Mammary epithelial cell (primary cell): ENCODE measurements at regions of chr9 and their contacts with region 1.

Region 1: GRCh38 chr9:121286973-121287741 is 19.2 kb downstream of the GSN start:
- DNase-seq: peak; percentile 99
- H3K4me3 ChIP-seq: peak overlapping the region in 1 of 3 experiments; percentile 32
- H3K27ac ChIP-seq: peak overlapping the region; percentile 100
- H3K4me1 ChIP-seq: peaks cover 63% of the 10 kb centered on the region
- H3K27me3 ChIP-seq: no peaks in the 10 kb centered on the region
- CTCF ChIP-seq: peak; percentile 17 to 46

Region 2: GRCh38 chr9:121196389-121196788 is 90.8 kb before region 1 on chr9:
- CTCF ChIA-PET with region 1: interaction called, 4 read pairs
- dilution Hi-C with region 1: loop called (anchors 5 kb)
- in situ Hi-C with region 1: no loop called
- intact Hi-C with region 1: no loop called
- DNase-seq: peak; percentile 20
- H3K4me3 ChIP-seq: peak overlapping the region in 1 of 3 experiments; percentile 49
- H3K27ac ChIP-seq: peak overlapping the region; percentile 94
- H3K4me1 ChIP-seq: peaks cover 46% of the 10 kb centered on the region
- H3K27me3 ChIP-seq: no peaks in the 10 kb centered on the region
- CTCF ChIP-seq: no peak

Region 3: DNA sequence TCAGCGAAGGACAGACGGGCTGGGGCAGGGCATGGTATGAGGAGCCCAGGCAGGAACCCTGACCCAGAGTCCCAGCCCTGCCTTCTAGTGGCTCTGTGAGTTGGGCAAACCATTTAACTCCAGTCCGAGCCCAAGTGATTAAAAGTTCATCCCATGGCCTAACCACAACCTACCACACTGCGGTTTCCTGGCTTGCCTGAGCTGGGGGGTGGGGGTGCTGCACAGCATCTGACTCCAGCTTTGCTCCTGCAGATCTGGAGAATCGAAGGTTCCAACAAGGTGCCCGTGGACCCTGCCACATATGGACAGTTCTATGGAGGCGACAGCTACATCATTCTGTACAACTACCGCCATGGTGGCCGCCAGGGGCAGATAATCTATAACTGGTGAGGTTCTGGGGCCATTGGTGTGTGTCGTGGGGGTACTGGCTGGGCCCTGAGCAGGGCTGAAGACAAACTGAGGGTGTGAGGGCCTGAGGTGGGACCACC is 33.9 kb after region 1 on chr9:
- CTCF ChIA-PET with region 1: no interaction called
- dilution Hi-C with region 1: no loop called
- in situ Hi-C with region 1: no loop called
- intact Hi-C with region 1: loop called (anchors 2 kb)
- DNase-seq: no peak
- H3K4me3 ChIP-seq: no peak overlapping the region
- H3K27ac ChIP-seq: no peak overlapping the region
- H3K4me1 ChIP-seq: peaks cover 20% of the 10 kb centered on the region
- H3K27me3 ChIP-seq: no peaks in the 10 kb centered on the region
- CTCF ChIP-seq: no peak

Region 4: GRCh38 chr9:121340676-121341392 is 53.7 kb after region 1 on chr9:
- CTCF ChIA-PET with region 1: no interaction called
- dilution Hi-C with region 1: no loop called
- in situ Hi-C with region 1: no loop called
- intact Hi-C with region 1: no loop called
- DNase-seq: no peak
- H3K4me3 ChIP-seq: no peak overlapping the region
- H3K27ac ChIP-seq: no peak overlapping the region
- H3K4me1 ChIP-seq: peaks cover under 1% of the 10 kb centered on the region
- H3K27me3 ChIP-seq: no peaks in the 10 kb centered on the region
- CTCF ChIP-seq: no peak